ENCODE measurements at regions of chr4 and their contacts with region 1.

Region 1: DNA sequence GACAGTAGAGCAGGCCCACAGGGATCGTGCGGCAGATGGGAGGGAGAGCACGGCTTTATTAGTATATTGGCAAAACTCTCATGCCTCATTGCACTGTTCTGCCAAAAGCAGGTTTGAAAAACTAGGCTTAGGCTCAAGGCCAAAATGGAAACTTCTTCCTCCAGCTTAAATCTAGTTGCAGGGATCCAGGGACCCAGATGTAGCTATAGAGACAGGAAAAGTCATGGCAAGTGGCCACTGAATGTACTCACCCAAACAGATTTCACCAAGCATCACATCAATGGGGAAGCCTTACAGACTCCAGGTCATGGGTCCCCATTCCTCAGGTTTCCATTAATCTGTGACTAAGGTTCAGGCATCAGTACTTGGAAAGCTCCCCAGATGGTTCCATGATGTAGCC is 149.2 kb downstream of the STK32B start:
- DNase-seq: no peak
- ATAC-seq: no peak
- H3K4me3 Mint-ChIP-seq: no peak overlapping the region; the same call in 1 of the 2 replicates
- H3K27ac Mint-ChIP-seq: no peak overlapping the region
- H3K4me1 Mint-ChIP-seq: peaks cover 62% of the 10 kb centered on the region
- H3K27me3 Mint-ChIP-seq: peaks cover 19% of the 10 kb centered on the region
- CTCF ChIP-seq: no peak

Region 2: GRCh38 chr4:5003372-5003857 is 197.1 kb before region 1 on chr4:
- CTCF ChIA-PET with region 1: no interaction called
- POLR2A ChIA-PET with region 1: no interaction called
- DNase-seq: no peak
- ATAC-seq: no peak
- H3K4me3 Mint-ChIP-seq: no peak overlapping the region
- H3K27ac Mint-ChIP-seq: no peak overlapping the region
- H3K4me1 Mint-ChIP-seq: no peaks in the 10 kb centered on the region
- H3K27me3 Mint-ChIP-seq: peaks cover 12% of the 10 kb centered on the region
- CTCF ChIP-seq: no peak

Region 3: DNA sequence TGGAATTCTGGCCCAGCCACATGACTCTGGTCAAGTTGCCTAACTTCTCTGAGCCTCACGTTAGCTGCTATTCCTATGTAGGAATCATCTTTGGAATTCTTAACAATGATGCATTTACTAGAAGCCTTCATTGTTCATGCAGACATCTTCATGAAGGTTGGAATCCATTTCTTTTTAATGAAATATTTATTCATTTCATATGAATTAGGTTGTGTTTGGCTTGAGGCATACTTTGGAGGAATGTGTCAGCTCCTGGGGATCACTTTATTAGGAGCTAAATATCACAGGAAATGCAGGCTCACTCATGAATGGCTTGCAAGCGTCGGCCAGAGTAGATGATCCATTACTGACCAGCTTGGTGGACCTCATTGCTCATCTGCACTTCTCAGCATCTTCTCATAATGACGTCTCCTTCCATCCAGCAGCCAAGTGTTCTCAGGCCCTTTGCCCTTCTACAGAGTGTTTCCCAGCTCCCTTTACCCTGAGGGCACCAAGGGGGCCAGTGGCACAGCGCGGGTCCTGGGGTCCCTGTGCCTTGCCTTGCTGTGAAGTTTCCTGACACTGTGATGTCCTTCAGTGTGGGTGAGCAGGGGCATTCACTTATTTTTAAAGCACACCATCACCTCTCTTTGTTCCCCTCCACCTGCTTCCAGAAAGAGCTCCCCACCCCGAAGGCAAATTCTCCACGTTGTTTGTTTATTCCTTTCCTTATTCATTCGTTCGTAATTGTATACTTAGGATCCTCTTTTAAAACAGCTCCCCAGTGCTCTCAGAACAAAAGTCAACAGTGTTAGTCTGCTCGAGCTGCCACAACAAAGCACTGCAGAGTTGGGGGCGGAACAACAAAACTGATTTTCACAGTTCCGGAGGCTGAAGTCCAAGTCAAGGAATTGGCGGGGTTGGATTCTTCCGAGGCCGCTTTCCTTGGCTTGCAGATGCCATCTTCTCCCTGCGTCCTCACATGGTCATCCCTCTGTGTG is 42.4 kb before region 1 on chr4:
- CTCF ChIA-PET with region 1: no interaction called
- POLR2A ChIA-PET with region 1: interaction called, 10 read pairs
- DNase-seq: no peak
- ATAC-seq: peak; percentile 39; the same call in 1 of the 2 replicates
- H3K4me3 Mint-ChIP-seq: no peak overlapping the region
- H3K27ac Mint-ChIP-seq: no peak overlapping the region
- H3K4me1 Mint-ChIP-seq: peaks cover 13% of the 10 kb centered on the region
- H3K27me3 Mint-ChIP-seq: peaks cover 27% of the 10 kb centered on the region
- CTCF ChIP-seq: no peak

Measured in WTC11 (cell line).